H1 (cell line): ENCODE measurements at regions of chr3 and their contacts with region 1.

Region 1: DNA sequence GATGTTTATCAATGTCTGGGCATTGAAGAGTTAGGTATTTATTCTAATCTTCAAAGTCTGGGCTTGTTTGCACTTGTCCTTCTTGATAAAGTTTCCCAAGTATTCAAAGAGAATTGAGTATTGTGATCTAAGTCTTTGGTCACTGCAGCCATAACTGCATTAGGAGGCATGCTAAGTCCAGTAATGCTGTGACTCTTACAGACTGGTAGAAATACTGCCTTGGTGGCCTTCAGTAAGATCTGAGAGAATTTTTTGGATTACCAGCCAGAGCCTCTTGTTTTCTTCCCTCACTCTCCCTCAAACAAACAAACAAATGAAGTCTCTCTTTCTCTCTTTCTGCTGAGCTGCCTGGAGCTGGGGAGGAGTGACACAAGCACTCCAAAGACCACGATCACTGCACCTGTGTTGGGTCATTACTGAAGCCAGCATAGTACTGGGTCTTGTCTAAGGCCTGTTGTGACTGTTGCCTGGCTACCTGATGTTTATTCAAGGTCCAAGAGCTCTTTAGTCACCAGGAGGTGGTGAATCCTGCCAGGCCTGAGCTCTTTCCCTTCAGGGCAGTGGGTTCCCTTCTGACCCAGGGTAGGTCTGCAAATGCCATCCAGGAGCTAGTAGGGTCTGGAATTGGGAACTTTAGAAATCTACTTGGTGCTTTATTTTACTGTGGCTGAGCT is 14.8 kb upstream of the RBP2 start:
- DNase-seq: peak in 1 of 2 experiments; percentile 30
- H3K4me3 ChIP-seq: no peak overlapping the region
- H3K27ac ChIP-seq: no peak overlapping the region
- H3K4me1 ChIP-seq: peaks cover 0 to 13% (median 8%) of the 10 kb centered on the region in 4 experiments; a peak in 5 of 7 replicates
- H3K27me3 ChIP-seq: no peaks in the 10 kb centered on the region
- CTCF ChIP-seq: no peak
- EP300 ChIP-seq: no peak
- POLR2A ChIP-seq: no peak
- RAD21 ChIP-seq: no peak

Region 2: GRCh38 chr3:139477710-139478640 is 13.2 kb before region 1 on chr3:
- CTCF ChIA-PET with region 1: interaction called, 5 read pairs
- POLR2A ChIA-PET with region 1: interaction called, 10 read pairs
- DNase-seq: peak in 1 of 2 experiments; percentile 26
- H3K4me3 ChIP-seq: no peak overlapping the region
- H3K27ac ChIP-seq: no peak overlapping the region
- H3K4me1 ChIP-seq: peaks cover 0 to 5% (median 1%) of the 10 kb centered on the region in 4 experiments; a peak in 2 of 7 replicates
- H3K27me3 ChIP-seq: no peaks in the 10 kb centered on the region
- CTCF ChIP-seq: no peak
- EP300 ChIP-seq: no peak
- POLR2A ChIP-seq: no peak
- RAD21 ChIP-seq: no peak

Region 3: GRCh38 chr3:139532976-139533375 is 41.8 kb after region 1 on chr3:
- CTCF ChIA-PET with region 1: no interaction called
- POLR2A ChIA-PET with region 1: no interaction called
- DNase-seq: no peak
- H3K4me3 ChIP-seq: no peak overlapping the region
- H3K27ac ChIP-seq: no peak overlapping the region
- H3K4me1 ChIP-seq: peaks cover 0 to 21% (median 16%) of the 10 kb centered on the region in 4 experiments; a peak in 6 of 7 replicates
- H3K27me3 ChIP-seq: peaks cover 0 to 5% (median 4%) of the 10 kb centered on the region in 4 experiments; a peak in 3 of 7 replicates
- CTCF ChIP-seq: no peak
- EP300 ChIP-seq: no peak
- POLR2A ChIP-seq: no peak
- RAD21 ChIP-seq: no peak